Astrocyte of the cerebellum (primary cell): ENCODE measurements at regions of chr10 and their contacts with region 1.

Region 1: GRCh38 chr10:67257018-67257417 is 331.2 kb downstream of the LRRTM3 start:
- DNase-seq: no peak
- H3K4me3 ChIP-seq: no peak overlapping the region
- CTCF ChIP-seq: no peak

Region 2: GRCh38 chr10:67306588-67307205 is 49.7 kb after region 1 on chr10:
- in situ Hi-C with region 1: no loop called
- DNase-seq: peak; percentile 6
- H3K4me3 ChIP-seq: no peak overlapping the region
- CTCF ChIP-seq: peak; percentile 57

Region 3: GRCh38 chr10:67331121-67331910 is 74.3 kb after region 1 on chr10:
- in situ Hi-C with region 1: loop called (anchors 5 kb)
- DNase-seq: no peak
- H3K4me3 ChIP-seq: no peak overlapping the region
- CTCF ChIP-seq: no peak